Activated CD4-positive, alpha-beta memory T cell treated with anti-CD3 and anti-CD28 coated beads for 36 hours (primary cell): ENCODE measurements at regions of chr17 and their contacts with region 1.

Region 1: GRCh38 chr17:45135192-45135977 is at the start of gene ACBD4:
- DNase-seq: peak; percentile 98
- H3K4me3 Mint-ChIP-seq: peak within 1 kb of the TSS; percentile 83
- H3K27ac Mint-ChIP-seq: peak within 1 kb of the TSS; percentile 67
- H3K4me1 Mint-ChIP-seq: peaks cover 13% of the 10 kb centered on the region
- H3K27me3 Mint-ChIP-seq: peaks cover 5% of the 10 kb centered on the region
- total RNA-seq, gene ACBD4: 12.5 to 13.8 TPM

Region 2: DNA sequence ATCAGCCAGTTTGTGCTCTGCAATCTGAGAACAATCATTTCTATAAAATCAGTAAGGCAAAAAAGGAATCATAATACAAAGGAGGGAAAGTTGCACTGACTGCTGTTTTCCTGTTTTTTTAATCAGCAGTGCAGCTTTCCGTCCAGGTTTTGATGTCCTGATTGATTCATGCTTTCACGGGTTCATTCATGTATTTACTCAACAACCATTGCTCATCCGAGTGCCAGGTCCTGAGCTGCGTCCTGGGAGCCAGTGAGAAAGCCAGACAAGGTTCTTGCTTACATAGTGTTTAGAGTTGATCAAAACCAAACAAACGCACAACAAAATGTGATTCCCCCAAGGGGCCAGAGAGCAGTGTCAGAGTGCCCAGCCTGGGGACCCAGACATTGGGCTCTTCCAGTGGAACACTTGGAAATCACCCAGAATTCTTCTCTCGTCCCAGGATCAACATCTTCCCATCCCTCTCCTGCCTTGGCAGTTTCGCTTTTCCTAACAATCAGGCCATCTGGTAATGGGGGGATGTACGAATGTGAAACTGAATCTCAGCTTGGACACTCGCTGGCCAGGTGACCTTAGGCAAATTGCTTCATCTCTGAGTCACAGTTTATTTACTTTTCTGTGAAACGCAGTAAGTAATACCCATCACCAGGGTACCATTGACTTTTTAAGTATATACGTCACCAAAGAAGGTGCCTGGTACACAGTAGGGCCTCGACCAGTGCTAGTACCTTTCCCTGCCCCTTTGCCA is 154.0 kb before region 1 on chr17:
- CTCF ChIA-PET with region 1: no interaction called
- POLR2A ChIA-PET with region 1: no interaction called
- intact Hi-C with region 1: no loop called
- DNase-seq: peak; percentile 44
- H3K4me3 Mint-ChIP-seq: no peak overlapping the region
- H3K27ac Mint-ChIP-seq: peak overlapping the region; percentile 25
- H3K4me1 Mint-ChIP-seq: peaks cover 2% of the 10 kb centered on the region
- H3K27me3 Mint-ChIP-seq: peaks cover 37% of the 10 kb centered on the region

Region 3: DNA sequence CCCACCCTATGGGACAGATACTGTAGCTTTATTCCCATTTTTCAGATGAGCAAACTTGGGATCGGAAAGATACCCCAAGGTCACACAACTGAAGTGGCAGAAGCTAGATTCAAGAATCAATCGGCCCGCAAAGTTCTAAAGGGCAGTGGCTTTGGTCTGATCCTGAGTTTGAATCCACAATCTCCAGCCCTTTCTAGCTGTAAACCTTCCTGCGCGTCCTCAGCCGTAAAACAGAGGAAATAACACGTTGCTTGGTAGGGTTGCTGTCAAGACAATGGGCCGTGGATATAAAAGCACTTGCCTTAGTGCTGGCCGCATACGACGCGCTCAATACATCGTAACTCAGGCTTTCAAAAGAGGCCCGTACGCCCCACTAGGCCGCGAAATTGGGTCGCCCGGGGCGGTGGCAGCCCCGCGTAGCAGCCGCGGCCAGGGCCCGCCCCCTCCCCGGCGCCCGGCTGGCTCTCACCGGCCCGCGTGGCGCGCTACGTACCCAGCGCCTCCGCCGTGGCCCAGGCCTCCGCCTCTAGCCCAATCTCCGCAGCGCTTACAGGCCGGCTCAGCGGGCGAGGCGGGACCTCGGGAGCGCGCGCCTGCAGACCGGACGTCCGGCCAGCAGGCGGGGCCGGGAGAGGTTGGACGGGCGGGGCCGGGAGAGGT is 84.2 kb before region 1 on chr17 and contains the start of gene DCAKD:
- CTCF ChIA-PET with region 1: interaction called, 9 read pairs
- POLR2A ChIA-PET with region 1: no interaction called
- intact Hi-C with region 1: loop called (anchors 5 kb)
- DNase-seq: peak; percentile 95
- H3K4me3 Mint-ChIP-seq: peak within 1 kb of the TSS; percentile 93
- H3K27ac Mint-ChIP-seq: peak within 1 kb of the TSS; percentile 94
- H3K4me1 Mint-ChIP-seq: peaks cover 45% of the 10 kb centered on the region
- H3K27me3 Mint-ChIP-seq: no peaks in the 10 kb centered on the region
- total RNA-seq, gene DCAKD: 32.0 to 34.0 TPM

Region 4: GRCh38 chr17:45098869-45099616 is 36.3 kb before region 1 on chr17:
- CTCF ChIA-PET with region 1: interaction called, 12 read pairs
- POLR2A ChIA-PET with region 1: no interaction called
- intact Hi-C with region 1: no loop called
- DNase-seq: peak; percentile 85
- H3K4me3 Mint-ChIP-seq: no peak overlapping the region
- H3K27ac Mint-ChIP-seq: no peak overlapping the region
- H3K4me1 Mint-ChIP-seq: no peaks in the 10 kb centered on the region
- H3K27me3 Mint-ChIP-seq: no peaks in the 10 kb centered on the region

Region 5: DNA sequence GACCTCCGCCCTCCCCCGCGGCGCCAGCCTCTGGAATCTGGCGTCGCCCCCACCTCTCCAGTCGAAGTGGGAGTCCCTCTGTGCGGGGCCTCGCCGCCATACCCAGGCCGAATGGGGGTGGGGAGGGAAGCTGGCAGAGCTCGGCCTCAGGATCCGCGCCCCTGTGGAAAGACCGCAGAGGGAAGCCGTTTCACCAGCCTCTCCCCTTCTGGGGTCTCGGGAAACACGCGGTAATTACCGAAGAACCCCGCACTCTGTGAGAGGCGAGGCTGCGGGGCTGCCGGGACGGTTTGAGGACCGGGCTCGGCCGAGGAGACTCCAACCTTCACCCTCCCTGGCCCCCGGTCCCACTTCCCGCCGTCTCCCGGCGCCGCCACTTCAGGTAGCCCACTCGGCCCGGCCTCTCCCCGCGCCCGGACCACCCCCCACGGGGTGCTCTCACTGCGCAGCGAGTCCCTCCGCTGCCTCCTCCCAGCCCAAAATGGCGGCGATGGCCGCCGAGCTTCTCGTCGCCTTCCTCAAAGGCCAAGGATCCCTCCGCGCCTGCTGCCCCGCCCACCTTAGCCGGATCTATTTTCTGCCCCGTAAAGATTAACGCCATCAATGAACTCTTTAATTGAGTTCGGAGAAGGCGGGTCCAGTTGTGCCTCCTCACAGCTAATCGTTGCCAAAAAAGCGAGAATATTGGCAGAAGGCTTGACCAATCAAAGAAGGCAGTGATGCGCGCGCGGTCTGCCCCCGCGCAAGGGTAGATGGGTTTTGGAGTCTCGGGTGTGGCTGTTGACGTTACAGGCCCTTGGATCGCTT is 25.8 kb after region 1 on chr17:
- CTCF ChIA-PET with region 1: interaction called, 316 read pairs
- POLR2A ChIA-PET with region 1: interaction called, 5 read pairs
- intact Hi-C with region 1: no loop called
- DNase-seq: peak; percentile 99
- H3K4me3 Mint-ChIP-seq: peak overlapping the region; percentile 99
- H3K27ac Mint-ChIP-seq: peak overlapping the region; percentile 99
- H3K4me1 Mint-ChIP-seq: peaks cover 38% of the 10 kb centered on the region
- H3K27me3 Mint-ChIP-seq: peaks cover 2% of the 10 kb centered on the region

Region 6: DNA sequence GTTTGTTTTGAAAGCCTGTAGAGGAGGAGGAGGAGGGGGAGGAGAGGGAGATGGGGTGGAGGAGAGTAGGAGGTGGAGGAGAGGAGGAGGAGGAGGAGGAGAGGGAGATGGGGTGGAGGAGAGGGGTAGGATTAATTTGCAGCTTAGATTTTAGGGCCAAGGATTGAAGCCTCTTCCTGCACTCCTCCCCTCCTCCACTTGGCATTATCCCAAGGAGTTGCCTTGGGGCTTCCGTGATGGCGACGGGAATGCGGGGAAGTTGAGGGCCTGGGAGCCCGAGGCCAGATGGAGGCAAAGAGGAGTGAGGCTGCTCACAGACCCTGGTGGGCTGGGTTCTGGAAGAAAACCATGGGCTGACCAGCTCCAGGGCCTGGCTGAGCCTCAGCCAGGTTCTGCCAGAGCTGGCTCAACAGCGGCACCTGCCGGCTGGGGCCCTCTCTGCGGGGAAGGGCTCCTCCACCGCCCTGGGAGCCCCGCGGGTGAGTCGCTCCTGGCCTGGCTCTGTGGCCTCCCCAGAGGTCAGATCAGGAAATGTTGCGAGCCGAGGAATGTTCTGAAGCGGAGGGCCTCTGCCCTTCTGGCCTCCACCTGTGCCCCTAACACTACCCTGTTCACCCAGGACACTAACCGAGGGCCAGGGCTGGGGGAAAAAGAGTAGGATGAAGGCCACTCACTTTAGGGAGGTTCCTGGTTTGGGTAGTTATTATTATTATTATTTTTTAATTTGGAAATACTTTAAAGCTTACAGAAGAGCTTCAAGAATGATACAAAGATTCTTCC is 62.4 kb after region 1 on chr17:
- CTCF ChIA-PET with region 1: interaction called, 335 read pairs
- POLR2A ChIA-PET with region 1: interaction called, 9 read pairs
- intact Hi-C with region 1: loop called (anchors 1 kb)
- DNase-seq: peak; percentile 93
- H3K4me3 Mint-ChIP-seq: no peak overlapping the region
- H3K27ac Mint-ChIP-seq: no peak overlapping the region
- H3K4me1 Mint-ChIP-seq: peaks cover 4% of the 10 kb centered on the region
- H3K27me3 Mint-ChIP-seq: no peaks in the 10 kb centered on the region

Region 7: GRCh38 chr17:45385331-45385997 is 250.1 kb after region 1 on chr17:
- CTCF ChIA-PET with region 1: interaction called, 11 read pairs
- POLR2A ChIA-PET with region 1: no interaction called
- intact Hi-C with region 1: loop called (anchors 10 kb)
- DNase-seq: peak; percentile 93
- H3K4me3 Mint-ChIP-seq: no peak overlapping the region
- H3K27ac Mint-ChIP-seq: no peak overlapping the region
- H3K4me1 Mint-ChIP-seq: peaks cover 13% of the 10 kb centered on the region
- H3K27me3 Mint-ChIP-seq: peaks cover 7% of the 10 kb centered on the region